Caco-2 (cell line): ENCODE measurements at regions of chr7 and their contacts with region 1.

Region 1: GRCh38 chr7:131513245-131514061 is 43.0 kb downstream of the PODXL start:
- DNase-seq: peak; percentile 85 to 88
- H3K4me3 ChIP-seq: no peak overlapping the region
- H3K4me3 Mint-ChIP-seq: no peak overlapping the region
- H3K27ac Mint-ChIP-seq: peak overlapping the region; percentile 4
- H3K4me1 ChIP-seq: peaks cover 19% of the 10 kb centered on the region
- H3K4me1 Mint-ChIP-seq: peaks cover 45% of the 10 kb centered on the region
- H3K27me3 ChIP-seq: no peaks in the 10 kb centered on the region
- H3K27me3 Mint-ChIP-seq: no peaks in the 10 kb centered on the region
- CTCF ChIP-seq: peak; percentile 93 to 95

Region 2: GRCh38 chr7:131443496-131443895 is 70.0 kb before region 1 on chr7:
- CTCF ChIA-PET with region 1: no interaction called
- POLR2A ChIA-PET with region 1: no interaction called
- intact Hi-C with region 1: no loop called
- DNase-seq: no peak
- H3K4me3 ChIP-seq: no peak overlapping the region
- H3K4me3 Mint-ChIP-seq: no peak overlapping the region
- H3K27ac Mint-ChIP-seq: no peak overlapping the region
- H3K4me1 ChIP-seq: no peaks in the 10 kb centered on the region
- H3K4me1 Mint-ChIP-seq: no peaks in the 10 kb centered on the region
- H3K27me3 ChIP-seq: no peaks in the 10 kb centered on the region
- H3K27me3 Mint-ChIP-seq: no peaks in the 10 kb centered on the region
- CTCF ChIP-seq: no peak

Region 3: GRCh38 chr7:131546583-131547111 is 33.2 kb after region 1 on chr7:
- CTCF ChIA-PET with region 1: interaction called, 9 read pairs
- POLR2A ChIA-PET with region 1: no interaction called
- intact Hi-C with region 1: loop called (anchors 5 kb)
- DNase-seq: peak in 1 of 2 experiments; percentile 69
- H3K4me3 ChIP-seq: no peak overlapping the region
- H3K4me3 Mint-ChIP-seq: no peak overlapping the region
- H3K27ac Mint-ChIP-seq: peak overlapping the region; percentile 1
- H3K4me1 ChIP-seq: peaks cover 21% of the 10 kb centered on the region
- H3K4me1 Mint-ChIP-seq: peaks cover 30% of the 10 kb centered on the region
- H3K27me3 ChIP-seq: no peaks in the 10 kb centered on the region
- H3K27me3 Mint-ChIP-seq: no peaks in the 10 kb centered on the region
- CTCF ChIP-seq: peak; percentile 77 to 80

Region 4: DNA sequence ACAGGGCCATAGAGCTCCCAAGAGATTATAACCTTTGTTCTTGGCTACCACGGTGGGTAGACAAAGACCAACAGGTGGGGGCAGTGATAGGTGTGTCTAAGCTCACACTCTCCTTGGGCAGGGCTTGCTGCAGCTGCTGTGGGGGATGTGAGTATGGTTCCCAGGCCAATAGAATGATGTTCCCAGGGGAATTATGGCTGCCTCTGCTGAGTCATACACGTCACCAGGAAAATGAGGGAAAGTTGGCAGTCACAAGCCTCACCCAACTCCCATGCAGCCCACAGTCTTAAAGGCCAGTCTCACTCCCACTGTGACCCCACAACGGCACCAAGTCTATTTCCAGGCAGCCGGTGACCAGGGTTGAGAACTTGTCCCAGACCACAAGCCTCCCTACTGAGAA is 496.3 kb after region 1 on chr7:
- CTCF ChIA-PET with region 1: no interaction called
- POLR2A ChIA-PET with region 1: no interaction called
- intact Hi-C with region 1: no loop called
- DNase-seq: no peak
- H3K4me3 ChIP-seq: no peak overlapping the region
- H3K4me3 Mint-ChIP-seq: no peak overlapping the region
- H3K27ac Mint-ChIP-seq: no peak overlapping the region
- H3K4me1 ChIP-seq: no peaks in the 10 kb centered on the region
- H3K4me1 Mint-ChIP-seq: no peaks in the 10 kb centered on the region
- H3K27me3 ChIP-seq: no peaks in the 10 kb centered on the region
- H3K27me3 Mint-ChIP-seq: peaks cover 6% of the 10 kb centered on the region
- CTCF ChIP-seq: no peak